ENCODE measurements at regions of chr21 and their contacts with region 1.

Region 1: GRCh38 chr21:45923146-45923545 is 58.4 kb upstream of the COL6A1 start:
- DNase-seq: peak; percentile 37
- H3K4me3 ChIP-seq: no peak overlapping the region
- H3K27ac ChIP-seq: no peak overlapping the region
- H3K27me3 ChIP-seq: no peaks in the 10 kb centered on the region
- CTCF ChIP-seq: peak; percentile 93

Region 2: GRCh38 chr21:45820171-45821091 is 102.7 kb before region 1 on chr21:
- CTCF ChIA-PET with region 1: interaction called, 15 read pairs
- POLR2A ChIA-PET with region 1: no interaction called
- DNase-seq: peak; percentile 85
- H3K4me3 ChIP-seq: no peak overlapping the region
- H3K27ac ChIP-seq: no peak overlapping the region
- H3K27me3 ChIP-seq: peaks cover 2% of the 10 kb centered on the region
- CTCF ChIP-seq: peak; percentile 95

Region 3: GRCh38 chr21:46079352-46080170 is 156.4 kb after region 1 on chr21:
- CTCF ChIA-PET with region 1: no interaction called
- POLR2A ChIA-PET with region 1: no interaction called
- DNase-seq: peak; percentile 80
- H3K4me3 ChIP-seq: no peak overlapping the region
- H3K27ac ChIP-seq: peak overlapping the region; percentile 78
- H3K27me3 ChIP-seq: no peaks in the 10 kb centered on the region
- CTCF ChIP-seq: no peak